Endothelial cell of umbilical vein (primary cell): ENCODE measurements at regions of chr14 and their contacts with region 1.

Region 1: DNA sequence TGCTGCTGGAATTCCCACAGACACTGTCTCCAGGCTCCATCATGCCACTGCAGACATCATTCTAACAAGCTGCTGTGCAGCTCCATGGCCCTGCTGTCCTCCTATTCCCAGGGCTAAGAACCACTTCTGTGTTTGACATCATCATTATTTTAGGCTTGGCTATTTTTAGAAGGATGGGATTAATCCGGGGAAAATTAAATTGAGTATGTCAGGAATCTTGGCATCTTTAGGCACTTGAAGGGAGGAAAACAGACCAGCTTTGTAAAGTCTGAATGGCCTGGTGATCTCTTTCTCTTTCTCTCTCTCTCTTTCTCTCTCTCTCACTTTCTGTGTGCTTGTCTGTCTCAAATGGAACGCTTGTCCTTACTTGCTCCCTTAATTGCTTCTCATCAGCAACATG is 568.3 kb upstream of the FLRT2 start:
- DNase-seq: no peak
- H3K4me3 ChIP-seq: no peak overlapping the region
- H3K27ac ChIP-seq: no peak overlapping the region
- H3K4me1 ChIP-seq: peaks cover 35% of the 10 kb centered on the region
- H3K27me3 ChIP-seq: no peaks in the 10 kb centered on the region
- CTCF ChIP-seq: no peak
- POLR2A ChIP-seq: no peak

Region 2: DNA sequence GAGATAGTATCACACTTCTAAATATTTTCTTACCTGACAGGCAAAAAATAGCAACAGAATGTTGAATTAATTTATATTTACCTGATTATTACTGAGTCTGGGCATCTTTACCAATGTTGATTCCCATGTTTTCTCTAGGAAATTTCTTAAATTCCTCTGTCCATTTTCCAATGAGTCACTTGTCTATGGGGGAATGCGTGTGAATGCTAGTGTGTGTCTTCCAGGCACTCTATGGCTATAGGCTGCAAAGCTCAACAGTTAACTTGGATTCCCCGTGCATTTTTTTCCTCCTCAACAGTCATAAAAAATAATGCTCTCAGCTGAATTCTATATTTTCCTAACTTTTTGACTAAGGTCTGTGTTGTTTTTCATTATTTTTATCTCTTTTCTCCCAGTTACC is 817.5 kb before region 1 on chr14:
- CTCF ChIA-PET with region 1: no interaction called
- POLR2A ChIA-PET with region 1: no interaction called
- dilution Hi-C with region 1: no loop called
- intact Hi-C with region 1: loop called (anchors 10 kb)
- DNase-seq: peak; percentile 58
- H3K4me3 ChIP-seq: no peak overlapping the region
- H3K27ac ChIP-seq: no peak overlapping the region
- H3K4me1 ChIP-seq: peaks cover 9% of the 10 kb centered on the region
- H3K27me3 ChIP-seq: no peaks in the 10 kb centered on the region
- CTCF ChIP-seq: no peak
- POLR2A ChIP-seq: no peak

Region 3: DNA sequence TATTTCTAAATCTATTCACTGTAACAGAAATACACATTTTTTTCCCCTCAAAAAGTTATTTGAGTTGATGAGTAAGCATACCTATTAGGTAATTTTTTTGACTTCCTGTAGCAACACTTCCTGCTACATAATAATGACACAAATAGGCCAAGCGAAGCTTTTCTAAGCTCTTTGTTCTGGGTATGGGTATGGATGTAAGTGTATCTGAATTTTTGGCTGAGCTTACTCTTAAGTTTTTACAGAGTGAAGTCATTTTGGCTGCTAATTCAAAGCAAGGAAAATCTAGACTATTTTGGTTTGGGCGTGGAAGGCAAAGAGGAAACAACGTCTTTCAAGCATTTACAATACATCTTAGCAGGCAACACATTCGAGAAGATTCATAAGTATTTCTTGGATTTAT is 637.7 kb before region 1 on chr14:
- CTCF ChIA-PET with region 1: no interaction called
- POLR2A ChIA-PET with region 1: no interaction called
- dilution Hi-C with region 1: no loop called
- intact Hi-C with region 1: loop called (anchors 5 kb)
- DNase-seq: peak; percentile 57
- H3K4me3 ChIP-seq: no peak overlapping the region
- H3K27ac ChIP-seq: peak overlapping the region; percentile 64
- H3K4me1 ChIP-seq: peaks cover 16% of the 10 kb centered on the region
- H3K27me3 ChIP-seq: no peaks in the 10 kb centered on the region
- CTCF ChIP-seq: no peak
- POLR2A ChIP-seq: no peak

Region 4: DNA sequence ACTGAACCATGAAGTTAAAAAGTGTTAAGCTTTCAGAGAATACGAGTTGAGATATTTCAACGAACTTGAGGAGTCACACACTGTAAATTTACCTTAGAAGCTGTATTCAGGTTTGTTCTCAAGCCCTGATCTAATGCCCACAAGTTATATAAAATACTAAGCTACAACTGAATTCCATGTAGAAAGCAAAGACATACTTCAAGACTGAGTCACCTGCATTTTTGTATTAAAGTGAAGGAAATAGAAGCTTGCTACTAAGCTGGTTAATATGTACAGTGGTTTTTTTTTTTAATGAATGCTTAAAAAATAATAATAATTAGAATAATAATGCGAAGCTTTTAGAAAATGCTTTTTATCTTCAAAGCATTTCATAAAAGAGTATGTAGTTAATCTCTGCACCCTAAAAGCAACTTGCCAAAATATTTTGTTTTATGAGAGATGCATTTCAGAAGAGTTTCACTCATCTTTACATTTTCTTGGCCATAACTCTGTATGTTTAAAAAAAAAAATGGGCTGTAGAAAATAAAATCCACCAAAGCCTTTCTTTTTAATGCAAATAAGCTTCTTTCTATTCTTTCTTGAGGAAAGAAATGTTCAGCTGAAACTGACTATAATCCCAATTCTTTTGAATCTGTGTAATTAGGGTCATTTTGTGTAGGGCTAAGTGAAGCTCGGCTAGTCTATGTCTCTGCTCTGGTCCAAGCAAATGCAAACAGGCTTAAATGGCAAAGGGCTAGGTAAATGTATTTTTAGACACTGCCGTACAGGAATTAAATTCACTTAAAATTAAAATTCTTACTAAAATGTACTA is 479.2 kb before region 1 on chr14:
- CTCF ChIA-PET with region 1: no interaction called
- POLR2A ChIA-PET with region 1: no interaction called
- dilution Hi-C with region 1: no loop called
- intact Hi-C with region 1: loop called (anchors 2 kb)
- DNase-seq: peak; percentile 71
- H3K4me3 ChIP-seq: peak overlapping the region in 1 of 3 experiments; percentile 4
- H3K27ac ChIP-seq: peak overlapping the region; percentile 78
- H3K4me1 ChIP-seq: peaks cover 33% of the 10 kb centered on the region
- H3K27me3 ChIP-seq: no peaks in the 10 kb centered on the region
- CTCF ChIP-seq: no peak
- POLR2A ChIP-seq: no peak

Region 5: GRCh38 chr14:85165094-85165493 is 203.5 kb after region 1 on chr14:
- CTCF ChIA-PET with region 1: no interaction called
- POLR2A ChIA-PET with region 1: no interaction called
- dilution Hi-C with region 1: no loop called
- intact Hi-C with region 1: loop called (anchors 2 kb)
- DNase-seq: peak; percentile 87
- H3K4me3 ChIP-seq: no peak overlapping the region
- H3K27ac ChIP-seq: peak overlapping the region; percentile 62
- H3K4me1 ChIP-seq: peaks cover 21% of the 10 kb centered on the region
- H3K27me3 ChIP-seq: no peaks in the 10 kb centered on the region
- CTCF ChIP-seq: peak in 1 of 2 donors; percentile 13
- POLR2A ChIP-seq: no peak

Region 6: GRCh38 chr14:85333313-85333712 is 371.7 kb after region 1 on chr14:
- CTCF ChIA-PET with region 1: no interaction called
- POLR2A ChIA-PET with region 1: no interaction called
- dilution Hi-C with region 1: no loop called
- intact Hi-C with region 1: loop called (anchors 10 kb)
- DNase-seq: peak; percentile 67
- H3K4me3 ChIP-seq: no peak overlapping the region
- H3K27ac ChIP-seq: no peak overlapping the region
- H3K4me1 ChIP-seq: peaks cover 14% of the 10 kb centered on the region
- H3K27me3 ChIP-seq: no peaks in the 10 kb centered on the region
- CTCF ChIP-seq: no peak
- POLR2A ChIP-seq: no peak